Panc1 (cell line): ENCODE measurements at regions of chr11 and their contacts with region 1.

Region 1: DNA sequence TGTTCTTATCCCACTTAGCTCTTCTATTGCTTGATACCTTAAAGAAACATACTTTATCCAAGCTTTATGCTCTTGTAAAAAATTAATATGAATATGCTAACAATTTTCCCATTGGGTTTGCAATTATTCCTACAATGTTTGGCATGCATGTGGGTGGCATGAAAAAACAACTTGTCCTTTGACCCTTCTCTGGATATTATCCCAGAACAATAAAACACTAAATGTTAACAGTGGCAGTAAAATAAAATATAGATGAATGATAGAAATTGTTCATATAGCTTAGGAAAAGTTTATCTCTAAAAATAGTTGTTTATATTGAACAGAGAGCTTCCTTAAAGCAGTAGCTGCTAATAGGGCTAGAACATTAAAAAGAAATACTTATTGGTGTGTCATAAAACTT is 860.5 kb upstream of the LRRC4C start:
- DNase-seq: no peak
- ATAC-seq: no peak
- H3K4me3 ChIP-seq: no peak overlapping the region
- H3K27ac ChIP-seq: no peak overlapping the region
- H3K4me1 ChIP-seq: no peaks in the 10 kb centered on the region
- H3K27me3 ChIP-seq: no peaks in the 10 kb centered on the region
- CTCF ChIP-seq: no peak

Region 2: DNA sequence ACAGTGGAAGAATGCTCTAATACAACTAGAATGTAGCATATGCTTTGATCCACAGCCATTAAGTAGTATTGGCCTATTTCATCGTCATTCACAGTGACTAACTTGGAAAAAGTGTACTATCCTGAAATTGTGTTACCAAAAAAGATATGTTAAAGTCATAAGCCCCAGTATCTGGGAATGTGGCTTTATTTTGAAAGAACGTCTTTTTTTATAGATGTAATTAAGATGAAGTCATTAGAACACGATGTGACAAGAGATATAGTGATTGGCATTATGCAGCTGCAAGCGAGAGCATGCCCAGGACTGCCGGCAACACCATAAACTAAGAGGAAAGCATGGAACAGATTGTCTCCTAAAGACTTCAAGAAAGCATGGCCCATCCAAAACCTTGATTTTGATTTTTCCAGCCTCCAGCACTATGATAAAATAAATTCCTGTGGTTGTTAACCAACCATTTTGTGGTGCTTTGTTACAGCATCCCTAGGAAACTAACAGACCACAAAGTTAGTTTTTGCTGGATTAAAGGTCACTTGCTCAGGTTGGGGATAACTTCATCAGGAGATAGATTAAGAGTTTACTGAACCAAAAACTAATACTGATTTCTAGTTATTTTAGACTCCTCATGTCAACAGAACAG is 10.1 kb after region 1 on chr11:
- CTCF ChIA-PET with region 1: interaction called, 13 read pairs
- POLR2A ChIA-PET with region 1: no interaction called
- in situ Hi-C with region 1: no loop called
- intact Hi-C with region 1: no loop called
- DNase-seq: no peak
- ATAC-seq: no peak
- H3K4me3 ChIP-seq: no peak overlapping the region
- H3K27ac ChIP-seq: no peak overlapping the region
- H3K4me1 ChIP-seq: no peaks in the 10 kb centered on the region
- H3K27me3 ChIP-seq: no peaks in the 10 kb centered on the region
- CTCF ChIP-seq: no peak